ENCODE measurements at regions of chr11 and their contacts with region 1.

Region 1: DNA sequence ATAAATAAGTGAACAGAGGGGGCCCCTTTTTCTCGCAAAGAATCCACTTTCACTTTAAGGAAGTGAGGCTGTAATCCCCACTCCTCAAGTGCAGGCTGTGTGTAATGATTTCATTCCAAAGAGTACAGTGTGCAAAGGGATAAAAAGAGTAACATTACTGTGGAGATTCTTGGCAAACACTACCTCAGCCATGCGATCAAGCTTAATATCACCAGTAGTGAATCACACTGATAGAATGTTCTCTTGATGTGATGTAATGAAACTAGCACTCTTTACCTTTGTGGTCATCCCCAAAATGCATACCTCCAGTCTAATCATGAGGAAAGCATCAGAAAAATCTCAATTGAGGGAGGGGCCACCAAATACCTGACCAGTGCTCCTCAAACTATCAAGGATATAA is 246.1 kb upstream of the CHORDC1 start:
- DNase-seq: no peak
- ATAC-seq: peak; percentile 41

Region 2: DNA sequence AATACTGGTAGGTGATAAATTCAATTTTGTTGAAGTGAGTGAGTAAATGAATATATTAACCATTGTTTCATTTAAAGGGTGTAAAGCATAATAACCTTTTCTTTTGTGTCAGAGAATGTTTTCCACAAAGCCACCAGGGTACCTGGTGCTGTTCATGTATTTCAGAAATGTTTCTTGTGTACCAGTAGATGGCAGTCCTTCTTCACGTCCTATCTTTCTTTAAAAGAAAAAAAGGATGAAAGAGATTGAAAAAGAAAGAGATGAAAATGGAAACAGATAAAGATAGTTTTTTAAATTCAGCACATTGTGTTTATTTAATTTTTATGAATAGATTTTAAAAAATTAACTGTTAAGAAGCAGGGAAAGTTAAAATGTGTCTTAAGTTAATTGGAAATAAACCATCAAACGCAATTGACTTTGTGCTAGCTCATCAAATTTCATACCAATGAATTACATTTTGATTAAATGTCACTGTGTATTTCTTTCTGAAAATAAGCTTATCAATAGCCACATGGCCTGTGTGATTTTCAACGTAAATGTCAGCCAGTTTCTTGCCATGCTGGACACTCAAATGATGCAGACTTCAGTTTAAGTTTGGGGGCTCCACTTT is 180.6 kb before region 1 on chr11:
- intact Hi-C with region 1: loop called (anchors 5 kb)
- DNase-seq: no peak
- ATAC-seq: no peak

Region 3: GRCh38 chr11:90434858-90435257 is 34.1 kb before region 1 on chr11:
- intact Hi-C with region 1: no loop called
- DNase-seq: no peak
- ATAC-seq: no peak

Measured in Right ventricle myocardium superior (tissue), 1 donor.